HEK293 (cell line): ENCODE measurements at regions of chr15 and their contacts with region 1.

Region 1: GRCh38 chr15:44580105-44580504 is 43.2 kb downstream of the EIF3J start:
- H3K4me3 ChIP-seq: no peak overlapping the region
- H3K27ac ChIP-seq: no peak overlapping the region
- H3K4me1 ChIP-seq: no peaks in the 10 kb centered on the region
- CTCF ChIP-seq: no peak

Region 2: DNA sequence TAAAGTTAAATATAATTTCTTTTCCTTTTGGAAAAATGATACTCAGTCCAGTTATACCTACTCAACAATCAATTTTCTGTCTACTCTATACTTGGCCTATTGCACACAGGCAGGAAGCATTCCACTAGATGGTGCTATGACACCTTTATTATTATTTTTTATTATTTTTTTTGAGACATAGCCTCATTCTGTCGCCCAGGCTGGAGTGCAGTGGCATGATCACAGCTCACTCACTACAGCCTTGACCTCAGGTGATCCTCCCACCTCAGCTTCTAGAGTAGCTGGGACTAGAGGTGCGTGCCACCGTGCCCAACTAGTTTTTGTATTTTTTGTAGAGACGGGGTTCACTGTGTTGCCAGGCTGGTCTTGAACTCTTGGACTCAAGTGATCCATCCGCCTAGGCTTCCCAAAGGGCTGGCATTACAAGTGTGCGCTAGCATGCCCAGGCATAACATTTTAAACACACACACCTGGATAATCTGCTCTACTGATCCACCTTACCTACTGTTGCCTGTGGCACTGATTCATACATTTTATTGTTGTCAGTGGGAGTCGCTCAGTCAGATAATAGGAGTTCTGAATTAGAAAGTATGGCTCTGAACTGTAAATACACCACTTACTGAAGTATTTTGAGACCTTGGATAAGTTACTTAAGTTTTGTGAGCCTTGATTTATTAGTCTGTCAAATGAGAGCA is 13.1 kb after region 1 on chr15:
- CTCF ChIA-PET with region 1: interaction called, 42 read pairs
- POLR2A ChIA-PET with region 1: no interaction called
- H3K4me3 ChIP-seq: no peak overlapping the region
- H3K27ac ChIP-seq: no peak overlapping the region
- H3K4me1 ChIP-seq: no peaks in the 10 kb centered on the region
- CTCF ChIP-seq: no peak